ENCODE measurements at regions of chr21 and their contacts with region 1.

Region 1: GRCh38 chr21:29413683-29414082 is 115.0 kb downstream of the BACH1 start:
- DNase-seq: no peak
- H3K4me3 ChIP-seq: no peak overlapping the region
- H3K27me3 ChIP-seq: no peaks in the 10 kb centered on the region
- CTCF ChIP-seq: no peak

Region 2: DNA sequence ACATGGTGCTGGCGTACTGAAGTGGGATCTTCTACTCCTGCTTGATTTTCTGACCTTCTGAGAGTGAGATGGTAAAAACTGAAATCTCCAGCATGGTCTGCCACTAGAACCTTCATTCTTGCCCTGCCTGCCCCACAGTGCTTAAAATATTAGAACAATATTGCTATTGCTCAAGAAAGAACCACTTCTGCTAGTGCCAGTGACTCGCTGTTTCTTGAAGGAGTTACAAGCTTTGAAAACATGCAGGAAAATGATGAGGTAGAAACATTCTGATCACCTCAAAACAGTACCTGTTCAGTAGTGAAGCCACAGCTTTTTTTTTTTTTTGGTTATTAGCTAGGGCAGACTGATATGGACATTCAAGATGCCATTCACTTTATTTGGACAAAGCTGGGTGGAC is 19.6 kb before region 1 on chr21:
- CTCF ChIA-PET with region 1: interaction called, 3 read pairs
- POLR2A ChIA-PET with region 1: interaction called, 11 read pairs
- DNase-seq: no peak
- H3K4me3 ChIP-seq: no peak overlapping the region
- H3K27me3 ChIP-seq: no peaks in the 10 kb centered on the region
- CTCF ChIP-seq: no peak

Measured in BJ (cell line).